ENCODE measurements at regions of chr17 and their contacts with region 1.

Region 1: GRCh38 chr17:78250891-78251794 is 19.7 kb downstream of the TMEM235 start:
- DNase-seq: peak; percentile 80
- H3K4me3 Mint-ChIP-seq: peak overlapping the region; percentile 81
- H3K27ac Mint-ChIP-seq: peak overlapping the region; percentile 74
- H3K4me1 Mint-ChIP-seq: peaks cover 47% of the 10 kb centered on the region
- H3K27me3 Mint-ChIP-seq: no peaks in the 10 kb centered on the region

Region 2: GRCh38 chr17:78019367-78019975 is 231.7 kb before region 1 on chr17:
- intact Hi-C with region 1: loop called (anchors 1 kb)
- DNase-seq: no peak
- H3K4me3 Mint-ChIP-seq: no peak overlapping the region
- H3K27ac Mint-ChIP-seq: no peak overlapping the region
- H3K4me1 Mint-ChIP-seq: peaks cover 27% of the 10 kb centered on the region
- H3K27me3 Mint-ChIP-seq: no peaks in the 10 kb centered on the region

Region 3: DNA sequence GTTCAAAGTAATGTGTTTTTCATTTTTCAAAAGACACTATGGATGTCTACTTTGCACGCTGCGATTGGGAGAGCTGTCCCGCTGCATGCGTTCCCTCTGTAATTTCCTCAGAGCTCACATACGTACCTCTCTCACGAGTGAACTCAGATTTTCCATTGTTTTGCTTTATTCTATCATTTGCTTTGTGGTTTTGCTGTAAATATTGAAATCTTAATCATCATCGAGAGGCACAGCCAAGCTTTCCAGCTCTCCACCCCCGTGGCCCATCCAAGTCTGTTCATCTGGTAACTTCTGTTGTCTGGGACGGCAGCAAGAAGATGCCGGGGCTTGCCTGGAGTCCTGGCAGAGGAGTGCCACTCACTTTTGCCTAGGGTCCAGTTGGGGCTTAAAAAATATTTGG is 143.7 kb before region 1 on chr17:
- intact Hi-C with region 1: no loop called
- DNase-seq: no peak
- H3K4me3 Mint-ChIP-seq: no peak overlapping the region
- H3K27ac Mint-ChIP-seq: peak overlapping the region; percentile 79
- H3K4me1 Mint-ChIP-seq: peaks cover 11% of the 10 kb centered on the region
- H3K27me3 Mint-ChIP-seq: no peaks in the 10 kb centered on the region

Region 4: GRCh38 chr17:78133971-78134898 is 116.9 kb before region 1 on chr17:
- intact Hi-C with region 1: loop called (anchors 5 kb)
- DNase-seq: peak; percentile 70
- H3K4me3 Mint-ChIP-seq: peak overlapping the region; percentile 86
- H3K27ac Mint-ChIP-seq: peak overlapping the region; percentile 85
- H3K4me1 Mint-ChIP-seq: peaks cover 69% of the 10 kb centered on the region
- H3K27me3 Mint-ChIP-seq: no peaks in the 10 kb centered on the region

Region 5: DNA sequence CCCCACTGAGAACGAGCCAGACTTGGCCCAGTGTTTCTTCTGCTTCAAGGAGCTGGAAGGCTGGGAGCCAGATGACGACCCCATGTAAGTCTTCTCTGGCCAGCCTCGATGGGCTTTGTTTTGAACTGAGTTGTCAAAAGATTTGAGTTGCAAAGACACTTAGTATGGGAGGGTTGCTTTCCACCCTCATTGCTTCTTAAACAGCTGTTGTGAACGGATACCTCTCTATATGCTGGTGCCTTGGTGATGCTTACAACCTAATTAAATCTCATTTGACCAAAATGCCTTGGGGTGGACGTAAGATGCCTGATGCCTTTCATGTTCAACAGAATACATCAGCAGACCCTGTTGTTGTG is 36.5 kb before region 1 on chr17:
- intact Hi-C with region 1: loop called (anchors 1 kb)
- DNase-seq: no peak
- H3K4me3 Mint-ChIP-seq: peak overlapping the region; percentile 96
- H3K27ac Mint-ChIP-seq: peak overlapping the region; percentile 91
- H3K4me1 Mint-ChIP-seq: peaks cover 15% of the 10 kb centered on the region
- H3K27me3 Mint-ChIP-seq: peaks cover 2% of the 10 kb centered on the region

Region 6: GRCh38 chr17:78360371-78361224 is 109.5 kb after region 1 on chr17:
- intact Hi-C with region 1: loop called (anchors 1 kb)
- DNase-seq: peak; percentile 87
- H3K4me3 Mint-ChIP-seq: peak overlapping the region; percentile 79
- H3K27ac Mint-ChIP-seq: peak overlapping the region; percentile 85
- H3K4me1 Mint-ChIP-seq: peaks cover 48% of the 10 kb centered on the region
- H3K27me3 Mint-ChIP-seq: no peaks in the 10 kb centered on the region